HepG2 (cell line): ENCODE measurements at regions of chr10 and their contacts with region 1.

Region 1: GRCh38 chr10:4813023-4813422 is 13.0 kb upstream of the AKR1E2 start:
- DNase-seq: peak; percentile 58
- ATAC-seq: peak; percentile 44; the same call in 2 of the 3 replicates
- H3K4me3 ChIP-seq: no peak overlapping the region
- H3K27ac ChIP-seq: no peak overlapping the region
- H3K4me1 ChIP-seq: peaks cover 33% of the 10 kb centered on the region
- H3K27me3 ChIP-seq: peaks cover 0 to 6% of the 10 kb centered on the region in 2 experiments; a peak in 1 of 5 replicates
- CTCF ChIP-seq: no peak
- EP300 ChIP-seq: no peak
- POLR2A ChIP-seq: no peak
- RAD21 ChIP-seq: no peak

Region 2: GRCh38 chr10:5385224-5385623 is 572.2 kb after region 1 on chr10:
- CTCF ChIA-PET with region 1: interaction called, 16 read pairs
- POLR2A ChIA-PET with region 1: no interaction called
- in situ Hi-C with region 1: no loop called
- intact Hi-C with region 1: loop called (anchors 2 kb)
- DNase-seq: no peak
- ATAC-seq: no peak
- H3K4me3 ChIP-seq: no peak overlapping the region
- H3K27ac ChIP-seq: no peak overlapping the region
- H3K4me1 ChIP-seq: no peaks in the 10 kb centered on the region
- H3K27me3 ChIP-seq: no peaks in the 10 kb centered on the region
- CTCF ChIP-seq: no peak
- EP300 ChIP-seq: no peak
- POLR2A ChIP-seq: no peak
- RAD21 ChIP-seq: no peak